K562 (cell line): ENCODE measurements at regions of chr4 and their contacts with region 1.

Region 1: GRCh38 chr4:56958111-56958517 is 19.3 kb downstream of the NOA1 start:
- DNase-seq: peak in 3 of 4 experiments; percentile 11 to 48 (median 35)
- ATAC-seq: peak; percentile 82
- H3K4me3 ChIP-seq: no peak overlapping the region
- H3K27ac ChIP-seq: no peak overlapping the region
- H3K4me1 ChIP-seq: peaks cover 0 to 11% of the 10 kb centered on the region in 2 experiments; a peak in 2 of 5 replicates
- H3K27me3 ChIP-seq: peaks cover 0 to 5% of the 10 kb centered on the region in 2 experiments; a peak in 3 of 5 replicates
- CTCF ChIP-seq: no peak
- EP300 ChIP-seq: no peak
- POLR2A ChIP-seq: no peak
- RAD21 ChIP-seq: no peak

Region 2: DNA sequence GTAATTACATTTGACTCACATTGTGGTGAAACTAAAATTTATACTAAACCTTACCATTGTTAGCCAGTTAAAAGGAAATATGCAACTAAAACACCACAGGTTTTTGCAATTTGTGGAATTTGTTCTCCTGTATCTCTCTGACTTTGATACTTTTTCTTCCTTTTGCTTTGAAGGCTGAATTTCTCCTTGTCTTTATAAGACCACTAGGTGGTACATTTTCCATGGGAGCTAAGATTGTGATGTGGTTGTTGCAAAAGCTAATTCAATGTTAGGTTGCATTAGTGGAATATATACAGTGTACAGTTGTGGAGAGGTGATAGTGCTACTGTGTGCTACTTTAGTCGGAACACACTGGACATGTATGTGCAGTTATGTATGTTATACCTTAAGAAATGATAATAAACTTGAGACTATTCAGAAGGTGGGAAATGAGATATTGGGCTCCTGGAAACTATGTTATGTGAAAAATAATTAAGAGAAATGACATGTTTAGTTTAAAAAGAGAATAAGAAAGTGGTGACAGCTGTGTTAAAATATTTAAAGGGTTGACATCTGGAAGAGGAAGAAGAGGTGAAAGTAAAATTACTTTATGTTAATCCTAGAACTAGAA is 382.2 kb before region 1 on chr4:
- CTCF ChIA-PET with region 1: no interaction called
- POLR2A ChIA-PET with region 1: no interaction called
- in situ Hi-C with region 1: no loop called
- intact Hi-C with region 1: no loop called
- DNase-seq: peak in 2 of 4 experiments; percentile 10 to 21
- ATAC-seq: peak; percentile 63
- H3K4me3 ChIP-seq: no peak overlapping the region
- H3K27ac ChIP-seq: no peak overlapping the region
- H3K4me1 ChIP-seq: no peaks in the 10 kb centered on the region
- H3K27me3 ChIP-seq: no peaks in the 10 kb centered on the region
- CTCF ChIP-seq: peak; percentile 21 to 43 (median 25); a peak in 3 of 6 replicates
- EP300 ChIP-seq: no peak
- POLR2A ChIP-seq: no peak
- RAD21 ChIP-seq: peak in 1 of 2 experiments; percentile 36; a peak in 2 of 4 replicates

Region 3: DNA sequence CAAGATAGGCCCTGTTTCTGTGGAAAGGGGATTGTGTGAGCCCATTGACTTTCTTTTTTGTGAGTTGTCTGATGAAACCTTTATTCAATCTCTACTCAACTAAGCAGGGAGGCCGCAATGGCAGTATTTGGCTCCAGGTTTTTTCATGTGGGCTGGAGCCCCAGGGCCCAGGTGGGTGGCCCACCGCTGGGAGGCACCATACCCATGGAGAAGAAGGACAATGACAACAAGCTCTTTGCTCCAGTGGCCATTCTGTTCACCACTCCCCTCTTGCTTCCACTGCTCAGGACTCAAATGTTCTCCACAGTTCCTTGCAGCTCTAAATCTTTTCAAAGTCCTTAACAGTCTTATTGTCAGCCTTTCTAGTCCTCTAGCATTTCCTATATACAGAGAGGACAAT is 331.2 kb before region 1 on chr4:
- CTCF ChIA-PET with region 1: no interaction called
- POLR2A ChIA-PET with region 1: no interaction called
- in situ Hi-C with region 1: no loop called
- intact Hi-C with region 1: no loop called
- DNase-seq: no peak
- ATAC-seq: no peak
- H3K4me3 ChIP-seq: no peak overlapping the region
- H3K27ac ChIP-seq: no peak overlapping the region
- H3K4me1 ChIP-seq: no peaks in the 10 kb centered on the region
- H3K27me3 ChIP-seq: no peaks in the 10 kb centered on the region
- CTCF ChIP-seq: peak; percentile 19 to 26 (median 19); a peak in 2 of 6 replicates
- EP300 ChIP-seq: no peak
- POLR2A ChIP-seq: no peak
- RAD21 ChIP-seq: 0 out of 4 replicates have a peak, but pooled peaks of 1 of the 2 experiments have one; percentile 6

Region 4: GRCh38 chr4:56843421-56843899 is 114.7 kb before region 1 on chr4:
- CTCF ChIA-PET with region 1: no interaction called
- POLR2A ChIA-PET with region 1: no interaction called
- in situ Hi-C with region 1: no loop called
- intact Hi-C with region 1: loop called (anchors 10 kb)
- DNase-seq: peak in 2 of 4 experiments; percentile 9 to 36
- ATAC-seq: peak; percentile 77
- H3K4me3 ChIP-seq: no peak overlapping the region
- H3K27ac ChIP-seq: no peak overlapping the region
- H3K4me1 ChIP-seq: no peaks in the 10 kb centered on the region
- H3K27me3 ChIP-seq: peaks cover 3 to 33% of the 10 kb centered on the region in 2 experiments
- CTCF ChIP-seq: peak; percentile 7 to 17 (median 12); a peak in 1 of 6 replicates
- EP300 ChIP-seq: no peak
- POLR2A ChIP-seq: no peak
- RAD21 ChIP-seq: no peak

Region 5: GRCh38 chr4:56907489-56908205 is 50.5 kb before region 1 on chr4 and contains the start of gene REST:
- CTCF ChIA-PET with region 1: interaction called, 6 read pairs
- POLR2A ChIA-PET with region 1: interaction called, 5 read pairs
- in situ Hi-C with region 1: no loop called
- intact Hi-C with region 1: loop called (anchors 5 kb)
- DNase-seq: peak; percentile 81 to 88 (median 86)
- ATAC-seq: peak; percentile 58
- H3K4me3 ChIP-seq: peak within 1 kb of the TSS; percentile 99
- H3K27ac ChIP-seq: peak within 1 kb of the TSS; percentile 97
- H3K4me1 ChIP-seq: peaks cover 16 to 18% of the 10 kb centered on the region in 2 experiments; a peak in 4 of 5 replicates
- H3K27me3 ChIP-seq: peaks cover 2 to 13% of the 10 kb centered on the region in 2 experiments; a peak in 4 of 5 replicates
- CTCF ChIP-seq: no peak
- EP300 ChIP-seq: no peak
- POLR2A ChIP-seq: no peak
- RAD21 ChIP-seq: no peak
- polyA plus RNA-seq, gene REST: 2.9 to 6.9 TPM